Transverse colon (tissue), 4 donors: ENCODE measurements at regions of chr10 and their contacts with region 1.

Region 1: GRCh38 chr10:119872860-119873681 is 428 bp upstream of the MCMBP start:
- DNase-seq: peak; percentile 91
- H3K4me3 ChIP-seq: peak overlapping the region; percentile 68 to 94 (median 84)
- H3K27ac ChIP-seq: peak overlapping the region; percentile 89 to 98 (median 94)
- H3K4me1 ChIP-seq: peaks cover 17 to 36% (median 22%) of the 10 kb centered on the region in 4 donors
- H3K27me3 ChIP-seq: no peaks in the 10 kb centered on the region
- CTCF ChIP-seq: no peak
- EP300 ChIP-seq: no peak
- POLR2A ChIP-seq: peak; percentile 59

Region 2: GRCh38 chr10:119750391-119751230 is 122.5 kb before region 1 on chr10:
- in situ Hi-C with region 1: loop called in 1 of 4 experiments (anchors 25 kb)
- intact Hi-C with region 1: no loop called
- DNase-seq: peak; percentile 68
- H3K4me3 ChIP-seq: no peak overlapping the region
- H3K27ac ChIP-seq: no peak overlapping the region
- H3K4me1 ChIP-seq: no peaks in the 10 kb centered on the region
- H3K27me3 ChIP-seq: no peaks in the 10 kb centered on the region
- CTCF ChIP-seq: peak; percentile 82 to 90 (median 85)
- EP300 ChIP-seq: no peak
- POLR2A ChIP-seq: no peak